Activated naive CD4-positive, alpha-beta T cell treated with anti-CD3 and anti-CD28 coated beads for 36 hours (primary cell): ENCODE measurements at regions of chr3 and their contacts with region 1.

Region 1: DNA sequence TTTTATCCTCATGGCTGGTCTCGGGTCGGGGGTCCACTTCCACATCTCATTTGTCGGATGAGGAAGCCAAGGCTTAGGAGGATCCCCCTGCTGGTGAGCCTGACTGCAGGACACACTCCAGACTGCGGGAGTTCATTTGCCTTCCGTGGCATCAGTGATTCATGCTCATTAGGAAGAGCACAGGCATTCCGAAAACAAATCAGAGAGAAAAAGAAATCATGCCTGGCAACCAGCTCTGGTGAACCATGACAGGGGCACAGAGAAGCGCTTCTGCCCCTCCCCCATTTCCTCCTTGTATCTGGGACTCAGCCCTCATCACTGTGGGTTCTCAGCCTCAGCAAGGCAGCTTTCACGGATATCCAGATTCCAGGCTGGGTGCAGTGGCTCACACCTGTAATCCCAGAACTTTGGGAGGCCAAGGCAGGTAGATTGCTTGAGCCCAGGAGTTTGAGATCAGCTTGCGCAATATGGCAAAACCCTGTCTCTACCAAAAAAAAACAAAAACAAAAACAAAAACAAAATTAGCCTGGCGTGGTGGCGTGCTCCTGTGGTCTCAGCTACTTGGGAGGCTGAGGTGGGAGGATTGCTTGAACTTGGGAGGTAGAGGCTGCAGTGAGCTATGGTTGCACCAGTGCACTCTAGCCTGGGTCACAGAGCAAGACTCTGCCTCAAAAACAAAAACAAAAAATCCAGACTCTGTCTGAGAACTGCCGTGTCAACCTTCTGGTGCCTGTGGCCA is 28.4 kb downstream of the IRAK2 start:
- DNase-seq: peak; percentile 93
- H3K4me3 Mint-ChIP-seq: peak overlapping the region; percentile 42
- H3K27ac Mint-ChIP-seq: peak overlapping the region; percentile 96
- H3K4me1 Mint-ChIP-seq: peaks cover 85% of the 10 kb centered on the region
- H3K27me3 Mint-ChIP-seq: no peaks in the 10 kb centered on the region

Region 2: DNA sequence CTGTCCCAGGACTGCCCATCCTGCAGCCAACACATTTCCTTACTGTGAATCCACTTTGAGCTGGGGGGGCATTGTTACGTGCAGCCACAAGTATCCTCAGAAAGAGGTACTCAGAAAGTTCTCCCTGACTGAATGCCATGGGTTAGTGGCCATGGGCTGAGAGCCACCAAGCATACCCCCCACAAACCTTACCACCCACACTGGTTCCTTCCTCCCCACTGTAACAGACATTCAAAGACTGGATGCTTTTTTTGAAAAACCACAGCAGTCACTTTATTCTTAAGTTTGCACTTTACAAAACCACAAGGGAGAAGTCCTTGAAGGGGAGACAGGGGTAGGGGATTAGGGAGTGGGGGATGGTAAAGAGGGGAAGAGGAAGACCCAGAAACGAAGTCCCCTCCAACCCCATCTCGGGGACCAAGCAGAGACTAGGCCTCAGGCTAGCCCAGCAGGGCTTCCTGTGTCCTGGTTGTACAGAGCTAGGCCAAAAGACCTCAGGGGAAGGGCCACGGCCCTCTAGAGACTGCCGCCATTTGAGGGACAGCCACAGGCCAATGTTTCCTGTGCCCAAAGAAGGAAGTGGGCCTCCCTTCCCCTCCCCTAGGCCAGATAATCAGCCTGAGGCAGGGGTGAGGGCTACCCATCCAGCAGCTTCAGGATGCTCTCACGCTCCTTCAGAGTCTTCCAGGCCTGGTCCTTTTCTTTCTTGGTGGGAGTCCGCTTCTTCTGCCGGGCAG is 413.2 kb before region 1 on chr3:
- CTCF ChIA-PET with region 1: no interaction called
- intact Hi-C with region 1: loop called (anchors 2 kb)
- DNase-seq: peak; percentile 47
- H3K4me3 Mint-ChIP-seq: no peak overlapping the region
- H3K27ac Mint-ChIP-seq: peak overlapping the region; percentile 91
- H3K4me1 Mint-ChIP-seq: peaks cover 56% of the 10 kb centered on the region
- H3K27me3 Mint-ChIP-seq: no peaks in the 10 kb centered on the region

Region 3: GRCh38 chr3:10085736-10086135 is 107.4 kb before region 1 on chr3:
- CTCF ChIA-PET with region 1: no interaction called
- intact Hi-C with region 1: no loop called
- DNase-seq: no peak
- H3K4me3 Mint-ChIP-seq: no peak overlapping the region
- H3K27ac Mint-ChIP-seq: no peak overlapping the region
- H3K4me1 Mint-ChIP-seq: no peaks in the 10 kb centered on the region
- H3K27me3 Mint-ChIP-seq: no peaks in the 10 kb centered on the region

Region 4: DNA sequence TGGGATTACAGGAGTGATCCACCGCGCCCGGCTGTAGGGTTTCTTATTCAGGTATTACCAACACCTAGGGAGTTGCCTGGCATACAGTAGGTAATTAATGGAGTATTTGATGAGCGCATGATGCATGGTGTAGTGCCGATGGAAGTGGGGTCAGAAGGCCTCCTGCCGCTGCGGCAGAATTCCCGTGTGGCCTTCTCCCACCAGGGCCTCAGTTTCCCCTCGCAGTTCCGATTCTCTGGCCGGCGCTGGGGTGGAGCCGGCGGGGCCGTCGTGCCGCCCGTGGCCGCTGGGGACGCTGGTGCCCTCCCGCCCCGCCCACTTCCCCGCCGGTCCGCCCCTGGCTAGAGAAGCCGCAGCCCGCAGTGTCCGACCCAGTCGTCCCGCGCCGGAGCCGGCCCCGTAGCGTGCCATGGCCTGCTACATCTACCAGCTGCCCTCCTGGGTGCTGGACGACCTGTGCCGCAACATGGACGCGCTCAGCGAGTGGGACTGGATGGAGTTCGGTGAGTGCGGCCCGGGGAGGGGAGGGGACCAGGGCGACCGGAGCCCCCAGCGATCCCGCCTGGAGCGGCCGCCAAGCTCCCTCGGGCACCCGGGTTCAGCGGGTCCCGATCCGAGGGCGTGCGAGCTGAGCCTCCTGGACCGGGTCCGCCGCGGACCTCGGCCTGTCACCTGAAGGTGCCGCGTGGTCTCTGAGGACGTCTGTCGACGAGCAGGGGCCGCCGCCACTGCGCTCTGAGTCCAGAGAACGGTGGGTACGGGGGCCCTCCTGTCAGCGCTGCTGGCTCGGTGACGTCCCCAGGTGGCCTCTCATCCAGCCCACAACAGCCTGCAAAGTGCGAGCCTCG is 28.4 kb before region 1 on chr3 and contains the start of gene IRAK2:
- CTCF ChIA-PET with region 1: interaction called, 38 read pairs
- intact Hi-C with region 1: loop called (anchors 2 kb)
- DNase-seq: peak; percentile 62
- H3K4me3 Mint-ChIP-seq: peak within 1 kb of the TSS; percentile 75
- H3K27ac Mint-ChIP-seq: no peak within 1 kb of the TSS
- H3K4me1 Mint-ChIP-seq: peaks cover 23% of the 10 kb centered on the region
- H3K27me3 Mint-ChIP-seq: no peaks in the 10 kb centered on the region
- total RNA-seq, gene IRAK2: 6.4 to 6.9 TPM

Region 5: DNA sequence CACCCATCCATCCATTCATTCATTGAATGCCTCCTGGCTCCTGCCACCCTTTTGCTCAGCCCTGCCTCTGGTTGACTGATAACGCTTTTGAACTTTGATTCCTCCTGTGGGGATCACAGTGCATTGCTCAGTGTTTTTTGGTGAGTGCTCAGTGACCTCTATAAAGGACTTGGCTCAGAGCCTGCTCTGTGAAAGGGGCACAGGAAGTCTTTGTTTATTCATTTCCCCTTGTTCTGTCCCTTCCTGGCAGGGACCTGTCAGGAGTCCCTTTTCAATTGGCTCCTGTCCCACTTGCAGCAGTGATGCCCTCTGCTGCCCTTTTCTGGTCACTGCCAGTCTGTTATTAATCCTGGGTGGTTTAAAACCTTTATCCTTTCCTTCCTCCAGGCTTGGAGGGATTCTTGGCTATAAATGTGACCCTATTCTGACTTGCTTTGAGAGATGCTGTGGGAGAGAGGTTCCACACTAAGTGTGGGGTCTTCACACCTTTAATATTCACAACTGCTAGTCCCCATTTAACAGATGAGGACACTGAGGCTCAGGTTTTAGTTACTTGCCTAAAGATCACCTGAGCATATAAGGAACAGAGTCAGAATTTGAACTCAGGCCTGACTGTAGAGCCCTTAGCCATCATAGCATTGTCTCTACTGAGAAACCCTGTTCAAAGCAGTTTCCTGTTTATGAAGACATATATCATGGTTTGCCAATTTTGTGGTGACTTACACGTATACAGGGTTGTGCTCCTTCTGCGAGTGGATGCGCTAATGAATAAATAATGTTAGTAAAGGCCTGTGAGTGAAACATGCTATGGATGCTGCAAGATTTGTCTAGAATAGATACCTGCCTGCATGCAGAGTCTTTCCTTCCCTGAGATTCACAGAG is 31.9 kb after region 1 on chr3:
- CTCF ChIA-PET with region 1: interaction called, 15 read pairs
- intact Hi-C with region 1: loop called (anchors 1 kb)
- DNase-seq: peak; percentile 88
- H3K4me3 Mint-ChIP-seq: no peak overlapping the region
- H3K27ac Mint-ChIP-seq: peak overlapping the region; percentile 79
- H3K4me1 Mint-ChIP-seq: peaks cover 58% of the 10 kb centered on the region
- H3K27me3 Mint-ChIP-seq: no peaks in the 10 kb centered on the region

Region 6: GRCh38 chr3:10437272-10437994 is 244.3 kb after region 1 on chr3:
- CTCF ChIA-PET with region 1: no interaction called
- intact Hi-C with region 1: loop called (anchors 5 kb)
- DNase-seq: peak; percentile 84
- H3K4me3 Mint-ChIP-seq: no peak overlapping the region
- H3K27ac Mint-ChIP-seq: peak overlapping the region; percentile 48
- H3K4me1 Mint-ChIP-seq: peaks cover 26% of the 10 kb centered on the region
- H3K27me3 Mint-ChIP-seq: no peaks in the 10 kb centered on the region

Region 7: DNA sequence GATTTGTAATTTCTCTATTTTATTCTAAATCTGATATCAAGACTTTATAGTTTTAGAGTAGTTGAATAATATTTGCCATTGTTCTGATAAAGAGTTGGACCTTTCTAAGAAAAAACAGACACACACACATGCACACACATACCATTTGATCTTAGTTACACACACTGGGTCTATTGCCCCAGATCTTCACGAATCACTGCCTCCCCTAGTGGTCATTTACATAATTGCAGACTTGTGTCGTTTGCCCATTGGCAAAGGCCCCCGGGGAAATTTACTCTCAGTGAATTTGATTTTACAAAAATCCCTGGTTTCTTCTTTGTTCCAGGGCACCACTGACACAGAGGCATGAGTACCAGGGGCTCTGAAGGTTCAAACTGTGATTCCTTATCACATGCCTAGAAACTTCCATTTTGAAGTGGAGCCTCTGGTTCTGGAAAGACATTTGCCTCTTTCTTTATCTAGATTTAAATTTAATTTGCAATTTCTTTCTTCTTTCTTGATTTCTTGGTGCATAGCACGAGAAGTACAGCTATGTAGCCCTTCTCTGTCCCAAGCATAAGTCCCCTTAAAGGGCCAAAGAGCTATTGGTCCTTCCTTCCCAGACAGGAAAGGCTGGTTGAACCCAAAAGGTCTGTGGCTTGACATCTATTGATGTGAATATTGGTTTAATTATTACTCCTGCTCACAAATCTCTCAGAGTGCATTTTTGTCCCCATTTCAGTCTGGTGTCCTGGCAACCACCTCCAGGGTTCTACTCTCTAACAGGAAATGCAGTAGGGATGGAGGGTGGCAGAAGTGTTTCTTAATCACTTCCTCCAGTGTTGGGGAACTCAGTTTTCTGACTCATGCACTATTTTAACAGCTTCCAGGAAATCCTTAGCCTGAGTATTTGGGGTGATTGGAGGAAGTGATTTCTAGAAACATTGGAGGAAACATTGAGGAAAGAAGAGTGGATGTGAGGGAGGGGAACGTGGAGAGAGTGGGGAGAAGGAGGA is 590.5 kb after region 1 on chr3:
- CTCF ChIA-PET with region 1: no interaction called
- intact Hi-C with region 1: no loop called
- DNase-seq: peak; percentile 51
- H3K4me3 Mint-ChIP-seq: no peak overlapping the region
- H3K27ac Mint-ChIP-seq: no peak overlapping the region
- H3K4me1 Mint-ChIP-seq: peaks cover 6% of the 10 kb centered on the region
- H3K27me3 Mint-ChIP-seq: peaks cover 19% of the 10 kb centered on the region